Right ventricle myocardium inferior (tissue), 1 donor: ENCODE measurements at regions of chr10 and their contacts with region 1.

Region 1: DNA sequence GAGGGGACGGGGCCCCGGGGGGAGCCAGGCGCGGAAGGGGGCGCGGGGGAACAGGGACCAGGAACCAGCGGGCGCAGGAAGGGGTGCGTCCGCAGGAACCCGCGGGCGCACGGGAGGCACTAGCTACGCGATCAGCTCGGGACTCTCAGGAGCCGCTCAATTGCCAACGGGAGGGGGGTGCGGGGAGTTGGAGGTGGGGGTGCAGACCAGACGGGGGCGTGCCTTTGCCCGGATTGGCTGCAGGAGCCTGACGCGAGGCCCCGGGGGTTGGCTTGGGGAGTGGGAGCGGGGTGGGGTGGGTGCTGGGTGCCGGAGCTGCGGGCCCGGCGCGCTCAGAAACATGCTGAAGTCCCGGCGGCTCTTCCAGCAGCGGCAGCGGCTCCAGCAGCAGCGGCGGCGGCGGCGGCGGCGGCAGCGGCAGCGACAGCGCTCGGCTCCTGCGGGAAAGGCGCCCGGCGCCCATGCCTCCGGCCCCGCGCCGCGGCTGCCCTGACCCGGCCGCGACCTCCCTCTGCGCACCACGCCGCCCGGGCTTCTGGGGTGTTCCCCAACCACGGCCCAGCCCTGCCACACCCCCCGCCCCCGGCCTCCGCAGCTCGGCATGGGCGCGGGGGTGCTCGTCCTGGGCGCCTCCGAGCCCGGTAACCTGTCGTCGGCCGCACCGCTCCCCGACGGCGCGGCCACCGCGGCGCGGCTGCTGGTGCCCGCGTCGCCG is at the start of gene ADRB1:
- DNase-seq: peak; percentile 95
- ATAC-seq: peak; percentile 92
- total RNA-seq, gene ADRB1: 63.1 TPM

Region 2: DNA sequence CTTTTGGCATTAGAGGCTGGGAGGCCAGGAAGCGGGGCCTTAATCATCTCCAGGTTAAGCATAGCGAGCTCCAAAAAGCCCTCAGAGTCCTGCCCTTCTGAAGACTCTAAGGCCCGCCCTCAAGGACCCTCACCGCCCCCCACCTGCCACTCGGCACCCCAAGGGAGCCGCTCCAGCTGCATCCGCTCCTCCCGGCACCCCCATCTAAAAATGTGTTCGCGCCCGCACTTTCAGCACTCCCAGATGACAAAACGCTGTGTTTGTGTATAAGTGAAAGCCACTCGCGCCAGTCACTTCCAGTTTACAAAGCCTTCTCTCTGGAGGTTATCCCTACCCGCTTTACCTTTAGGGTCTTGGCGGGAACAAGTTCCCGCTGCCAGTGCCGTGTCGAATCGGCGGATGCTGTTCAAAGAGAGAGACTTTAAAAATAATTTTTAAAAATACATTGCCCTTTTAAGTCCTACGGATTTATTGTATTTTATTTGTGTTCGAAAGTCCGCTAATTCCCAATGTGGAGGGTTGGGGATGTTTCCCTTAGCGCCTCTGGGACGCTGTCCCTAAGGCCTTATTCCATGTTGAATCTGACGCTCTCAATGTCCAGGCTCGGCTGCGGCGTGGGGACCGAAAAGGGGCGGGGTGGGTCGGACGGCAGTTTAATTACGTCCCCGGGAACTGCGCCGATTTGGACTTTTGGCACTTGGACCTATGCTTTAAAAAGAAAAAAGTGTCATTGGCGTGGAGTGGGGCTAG is 189.5 kb before region 1 on chr10 and contains the starts of genes DCLRE1A and NHLRC2:
- intact Hi-C with region 1: loop called (anchors 2 kb)
- DNase-seq: peak; percentile 92
- ATAC-seq: peak; percentile 87
- total RNA-seq, gene DCLRE1A: 6.8 TPM
- total RNA-seq, gene NHLRC2: 60.6 TPM

Region 3: DNA sequence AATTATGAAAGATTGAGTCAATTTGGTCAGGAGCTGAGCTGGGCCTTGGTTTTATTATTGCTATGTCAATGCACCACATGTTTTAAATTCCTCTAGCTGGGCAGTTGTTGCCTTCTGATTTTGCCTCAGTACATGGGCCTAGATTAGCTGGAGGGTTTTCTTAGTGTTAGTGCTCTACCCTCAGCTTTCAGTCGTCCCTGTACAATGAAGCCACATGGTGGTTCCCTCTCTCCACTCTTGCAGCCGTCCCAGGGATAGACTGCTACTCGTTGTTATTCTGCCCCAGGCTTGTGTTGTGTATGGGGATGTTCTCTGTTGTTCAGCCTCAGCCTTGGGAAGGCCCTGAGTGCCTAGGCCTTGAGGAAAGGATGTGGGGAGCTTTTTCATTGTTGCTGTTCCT is 152.2 kb before region 1 on chr10:
- intact Hi-C with region 1: loop called (anchors 10 kb)
- DNase-seq: no peak
- ATAC-seq: peak; percentile 89

Region 4: GRCh38 chr10:113922787-113923570 is 120.7 kb before region 1 on chr10:
- intact Hi-C with region 1: loop called (anchors 5 kb)
- DNase-seq: no peak
- ATAC-seq: peak; percentile 58

Region 5: DNA sequence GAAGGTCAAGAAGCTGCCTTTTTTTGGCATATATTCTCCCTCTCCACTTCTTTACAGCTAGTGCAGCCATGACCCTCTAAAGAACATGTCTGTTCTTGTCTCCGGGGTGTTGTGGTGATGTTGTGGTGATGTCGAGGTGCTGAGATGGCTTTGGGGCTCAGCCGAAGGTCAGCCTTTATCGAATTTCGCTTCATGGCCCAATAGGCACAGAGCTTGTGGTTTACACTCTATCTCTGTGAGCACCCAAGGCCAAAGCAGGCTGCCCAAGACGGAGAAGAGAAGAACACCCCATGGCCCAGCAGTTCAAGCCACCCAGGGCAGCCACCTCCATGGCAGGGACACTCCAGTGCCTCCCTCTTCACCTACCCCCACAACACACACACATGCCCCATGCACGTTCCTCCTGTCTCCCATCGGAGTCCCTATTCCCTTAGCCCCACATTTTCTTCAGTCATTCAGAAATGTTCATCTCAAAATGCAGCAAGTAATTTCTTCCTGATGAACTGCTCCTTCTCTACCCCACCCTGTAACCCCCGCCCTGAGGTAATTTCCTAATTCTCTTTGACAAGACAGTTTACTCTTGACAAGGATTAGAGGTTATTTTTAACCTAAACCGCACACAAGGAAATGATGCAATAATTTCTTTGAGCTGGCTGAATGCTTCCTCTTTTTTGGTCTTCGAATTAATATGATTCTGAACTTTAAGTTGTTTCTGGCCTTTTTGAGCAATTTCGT is 18.6 kb before region 1 on chr10:
- intact Hi-C with region 1: loop called (anchors 1 kb)
- DNase-seq: no peak
- ATAC-seq: peak; percentile 19

Region 6: DNA sequence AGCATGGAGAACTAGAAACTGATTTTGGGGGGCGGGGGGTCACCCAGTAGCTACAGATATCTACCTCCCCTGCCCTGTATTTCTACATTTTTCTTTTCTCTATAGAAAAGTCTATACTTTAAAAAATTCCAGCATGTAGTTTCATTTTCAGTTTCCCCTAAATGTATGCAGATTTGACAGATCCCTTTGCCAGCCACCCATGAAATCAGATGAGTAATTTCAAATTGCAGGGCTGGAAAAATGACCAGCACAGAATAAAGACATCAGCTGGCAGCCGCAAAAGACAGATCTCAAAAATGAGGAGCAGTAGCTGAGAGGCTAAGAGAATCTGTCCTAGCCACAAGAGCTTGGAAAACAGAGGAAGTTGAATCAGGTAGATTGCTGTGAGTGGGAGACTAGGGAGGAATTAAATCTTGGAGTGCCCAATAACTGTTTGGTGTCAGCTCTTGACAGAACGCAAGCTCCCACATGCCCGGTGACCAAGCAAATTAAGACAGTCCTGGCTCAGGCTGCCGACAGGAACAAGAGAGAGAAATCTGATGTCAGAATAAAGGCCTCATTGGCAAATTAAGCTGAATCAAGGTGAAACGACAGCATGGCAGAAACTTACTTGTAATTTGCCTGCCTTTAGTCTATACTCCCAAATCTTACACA is 24.5 kb after region 1 on chr10:
- intact Hi-C with region 1: loop called (anchors 2 kb)
- DNase-seq: no peak
- ATAC-seq: peak; percentile 18